Activated B cell treated with CpG ODN at 0.5 μM for 24 hours (primary cell): ENCODE measurements at regions of chr1 and their contacts with region 1.

Region 1: GRCh38 chr1:185420588-185421081 is 103.6 kb upstream of the IVNS1ABP start:
- DNase-seq: no peak
- ATAC-seq: no peak
- H3K4me3 Mint-ChIP-seq: no peak overlapping the region
- H3K27ac Mint-ChIP-seq: no peak overlapping the region
- H3K4me1 Mint-ChIP-seq: no peaks in the 10 kb centered on the region
- H3K27me3 Mint-ChIP-seq: peaks cover 3% of the 10 kb centered on the region
- CTCF ChIP-seq: no peak

Region 2: DNA sequence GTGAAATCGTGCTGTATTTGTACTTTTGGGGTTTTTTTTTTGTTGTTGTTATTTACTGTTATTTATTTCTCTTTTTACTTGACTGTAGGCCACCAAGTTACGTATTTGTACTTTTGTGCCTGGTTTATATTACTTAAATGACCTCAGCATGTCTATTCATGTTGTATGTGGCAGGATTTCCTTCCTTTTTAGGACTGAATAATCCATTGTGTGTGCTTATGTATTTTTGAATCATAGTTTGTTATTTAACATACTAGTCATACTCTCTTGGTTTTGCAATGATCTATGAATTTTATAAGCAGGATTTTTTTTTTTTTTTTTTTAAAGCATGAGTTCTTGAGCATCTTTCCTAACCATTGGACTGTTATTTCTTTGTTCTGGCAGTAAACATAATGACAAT is 324.1 kb before region 1 on chr1:
- CTCF ChIA-PET with region 1: no interaction called
- POLR2A ChIA-PET with region 1: no interaction called
- intact Hi-C with region 1: no loop called
- DNase-seq: no peak
- ATAC-seq: no peak
- H3K4me3 Mint-ChIP-seq: no peak overlapping the region
- H3K27ac Mint-ChIP-seq: no peak overlapping the region
- H3K4me1 Mint-ChIP-seq: no peaks in the 10 kb centered on the region
- H3K27me3 Mint-ChIP-seq: no peaks in the 10 kb centered on the region
- CTCF ChIP-seq: no peak

Region 3: GRCh38 chr1:185409763-185410528 is 10.7 kb before region 1 on chr1:
- CTCF ChIA-PET with region 1: no interaction called
- POLR2A ChIA-PET with region 1: no interaction called
- intact Hi-C with region 1: loop called (anchors 2 kb)
- DNase-seq: no peak
- ATAC-seq: no peak
- H3K4me3 Mint-ChIP-seq: no peak overlapping the region
- H3K27ac Mint-ChIP-seq: no peak overlapping the region
- H3K4me1 Mint-ChIP-seq: peaks cover 57% of the 10 kb centered on the region
- H3K27me3 Mint-ChIP-seq: no peaks in the 10 kb centered on the region
- CTCF ChIP-seq: no peak

Region 4: DNA sequence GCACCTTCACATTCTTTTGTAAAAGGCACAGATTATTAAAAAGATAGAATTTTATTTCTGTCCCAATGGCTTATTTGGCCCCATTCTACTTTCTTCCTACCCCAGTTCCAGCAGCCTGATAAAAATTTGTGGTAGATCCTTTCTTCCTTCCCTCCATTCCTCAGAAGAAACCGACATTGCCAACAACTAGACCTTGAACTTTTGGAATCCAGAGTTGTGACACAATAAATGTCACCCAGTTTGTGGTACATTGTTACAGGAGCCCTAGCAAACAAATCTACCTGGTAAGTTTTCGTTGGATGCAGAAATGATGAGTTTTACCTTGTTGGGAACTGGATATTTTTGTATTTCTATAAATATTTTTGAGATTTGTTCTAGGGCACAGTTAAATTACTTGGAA is 38.0 kb after region 1 on chr1:
- CTCF ChIA-PET with region 1: no interaction called
- POLR2A ChIA-PET with region 1: no interaction called
- intact Hi-C with region 1: loop called (anchors 5 kb)
- DNase-seq: no peak
- ATAC-seq: no peak
- H3K4me3 Mint-ChIP-seq: no peak overlapping the region
- H3K27ac Mint-ChIP-seq: no peak overlapping the region
- H3K4me1 Mint-ChIP-seq: no peaks in the 10 kb centered on the region
- H3K27me3 Mint-ChIP-seq: no peaks in the 10 kb centered on the region
- CTCF ChIP-seq: no peak